Activated CD8-positive, alpha-beta T cell treated with anti-CD3 and anti-CD28 coated beads, Interleukin-2, amount 10 ng/mL, durations not matched to agents 7 days and 5 days (primary cell): ENCODE measurements at regions of chr3 and their contacts with region 1.

Region 1: GRCh38 chr3:69306239-69307185 is 79.4 kb downstream of the FRMD4B start:
- DNase-seq: peak; percentile 82
- ATAC-seq: peak; percentile 98
- H3K4me3 Mint-ChIP-seq: peak overlapping the region; percentile 17
- H3K27ac Mint-ChIP-seq: peak overlapping the region; percentile 65
- H3K4me1 Mint-ChIP-seq: peaks cover 8% of the 10 kb centered on the region
- H3K27me3 Mint-ChIP-seq: no peaks in the 10 kb centered on the region

Region 2: GRCh38 chr3:68997887-68998286 is 308.6 kb before region 1 on chr3:
- CTCF ChIA-PET with region 1: no interaction called
- POLR2A ChIA-PET with region 1: no interaction called
- DNase-seq: no peak
- ATAC-seq: no peak
- H3K4me3 Mint-ChIP-seq: no peak overlapping the region
- H3K27ac Mint-ChIP-seq: no peak overlapping the region
- H3K4me1 Mint-ChIP-seq: no peaks in the 10 kb centered on the region
- H3K27me3 Mint-ChIP-seq: no peaks in the 10 kb centered on the region

Region 3: GRCh38 chr3:69129531-69129930 is 177.0 kb before region 1 on chr3:
- CTCF ChIA-PET with region 1: interaction called, 25 read pairs
- POLR2A ChIA-PET with region 1: no interaction called
- DNase-seq: no peak
- ATAC-seq: no peak
- H3K4me3 Mint-ChIP-seq: no peak overlapping the region
- H3K27ac Mint-ChIP-seq: no peak overlapping the region
- H3K4me1 Mint-ChIP-seq: no peaks in the 10 kb centered on the region
- H3K27me3 Mint-ChIP-seq: peaks cover 19% of the 10 kb centered on the region

Region 4: DNA sequence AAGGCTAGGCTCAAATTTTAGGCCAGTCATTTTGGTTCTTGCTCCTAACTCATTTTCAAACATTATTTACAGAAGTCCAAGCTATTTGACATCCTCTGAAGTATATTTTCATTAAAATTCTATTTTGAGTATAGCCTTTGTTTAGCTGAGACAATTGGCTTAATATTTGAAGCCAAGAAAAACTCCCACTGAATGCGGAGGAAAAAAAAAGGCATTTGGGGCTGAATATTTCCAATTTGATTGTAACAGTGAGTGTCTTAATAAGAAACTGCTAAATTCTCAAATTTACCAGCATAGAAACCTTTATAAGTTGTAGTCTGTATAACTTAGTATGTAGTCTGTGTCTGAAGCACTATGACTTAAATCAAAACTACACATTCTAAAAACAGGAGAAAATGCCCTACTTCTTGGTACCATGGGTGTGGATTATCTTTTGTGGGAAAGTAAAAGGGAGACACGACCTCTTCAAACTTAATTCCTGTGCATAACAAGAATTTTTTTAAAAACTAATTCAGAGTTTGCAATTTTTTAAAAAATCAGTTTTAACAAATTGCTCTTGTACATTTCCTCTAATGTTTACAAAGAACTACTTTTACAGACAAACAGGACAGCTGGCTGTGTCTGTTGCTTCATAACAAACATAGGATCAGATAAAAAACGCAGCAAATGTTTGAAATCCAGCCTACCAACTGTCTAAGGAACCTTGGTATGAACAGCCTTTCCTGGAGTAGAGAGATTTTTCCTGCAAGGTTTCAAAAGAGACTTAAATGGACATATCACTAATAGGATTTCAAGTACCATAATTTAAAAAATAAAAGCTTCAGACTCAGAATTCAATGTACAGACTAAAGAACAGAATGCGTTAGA is 131.4 kb before region 1 on chr3:
- CTCF ChIA-PET with region 1: interaction called, 16 read pairs
- POLR2A ChIA-PET with region 1: no interaction called
- DNase-seq: no peak
- ATAC-seq: no peak
- H3K4me3 Mint-ChIP-seq: no peak overlapping the region
- H3K27ac Mint-ChIP-seq: no peak overlapping the region
- H3K4me1 Mint-ChIP-seq: peaks cover 13% of the 10 kb centered on the region
- H3K27me3 Mint-ChIP-seq: no peaks in the 10 kb centered on the region

Region 5: GRCh38 chr3:69282181-69282580 is 24.3 kb before region 1 on chr3:
- CTCF ChIA-PET with region 1: interaction called, 19 read pairs
- POLR2A ChIA-PET with region 1: no interaction called
- DNase-seq: peak; percentile 45
- ATAC-seq: peak; percentile 85
- H3K4me3 Mint-ChIP-seq: no peak overlapping the region
- H3K27ac Mint-ChIP-seq: no peak overlapping the region
- H3K4me1 Mint-ChIP-seq: peaks cover 12% of the 10 kb centered on the region
- H3K27me3 Mint-ChIP-seq: no peaks in the 10 kb centered on the region

Region 6: GRCh38 chr3:69318410-69318809 is 11.9 kb after region 1 on chr3:
- CTCF ChIA-PET with region 1: interaction called, 35 read pairs
- POLR2A ChIA-PET with region 1: no interaction called
- DNase-seq: no peak
- ATAC-seq: no peak
- H3K4me3 Mint-ChIP-seq: no peak overlapping the region
- H3K27ac Mint-ChIP-seq: no peak overlapping the region
- H3K4me1 Mint-ChIP-seq: no peaks in the 10 kb centered on the region
- H3K27me3 Mint-ChIP-seq: no peaks in the 10 kb centered on the region

Region 7: DNA sequence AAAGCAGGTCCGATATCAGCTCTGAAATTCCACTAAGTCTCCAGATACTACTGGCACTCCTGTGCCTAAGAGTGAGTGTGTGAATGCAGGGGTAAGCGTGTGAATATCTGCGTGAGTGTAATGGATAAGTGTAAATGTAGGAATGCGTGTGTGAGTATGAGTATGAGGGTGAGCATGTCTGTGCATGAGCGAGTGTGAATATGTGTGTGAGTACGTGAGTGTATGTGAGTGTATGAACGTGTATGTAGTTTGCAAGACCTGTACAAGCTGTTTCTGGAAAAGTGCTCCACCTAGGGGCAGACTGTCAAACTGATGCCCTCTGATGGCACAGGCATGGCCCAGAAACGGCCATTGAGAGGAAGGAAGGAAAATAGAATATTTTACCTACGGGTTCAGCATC is 103.7 kb after region 1 on chr3:
- CTCF ChIA-PET with region 1: interaction called, 17 read pairs
- POLR2A ChIA-PET with region 1: no interaction called
- DNase-seq: peak; percentile 81
- ATAC-seq: peak; percentile 94
- H3K4me3 Mint-ChIP-seq: no peak overlapping the region
- H3K27ac Mint-ChIP-seq: no peak overlapping the region
- H3K4me1 Mint-ChIP-seq: peaks cover 3% of the 10 kb centered on the region
- H3K27me3 Mint-ChIP-seq: peaks cover 12% of the 10 kb centered on the region